Panc1 (cell line): ENCODE measurements at regions of chr17 and their contacts with region 1.

Region 1: GRCh38 chr17:53912117-53912516 is 89.4 kb downstream of the KIF2B start:
- DNase-seq: no peak
- ATAC-seq: no peak
- H3K4me3 ChIP-seq: no peak overlapping the region
- H3K27ac ChIP-seq: no peak overlapping the region
- H3K4me1 ChIP-seq: no peaks in the 10 kb centered on the region
- H3K27me3 ChIP-seq: no peaks in the 10 kb centered on the region
- CTCF ChIP-seq: no peak

Region 2: DNA sequence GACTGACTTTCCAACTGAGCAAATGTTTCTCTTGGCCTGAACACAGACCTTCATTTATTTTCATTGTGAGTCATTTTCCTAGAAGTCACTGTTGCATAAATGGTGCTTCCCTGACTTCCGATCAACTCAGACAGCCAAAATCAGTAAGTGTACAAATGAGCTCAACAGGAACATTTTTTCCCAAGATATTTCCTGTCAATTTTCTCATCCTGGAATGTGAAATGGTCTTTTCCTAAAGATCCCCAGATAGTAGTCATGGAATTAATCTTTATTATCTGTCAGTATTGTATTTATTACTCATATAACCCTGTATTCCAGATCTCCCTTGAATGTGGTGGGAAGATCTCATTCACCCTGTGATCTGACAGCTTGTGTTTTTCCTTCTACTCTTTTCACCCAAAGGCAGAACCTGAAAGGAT is 449.7 kb before region 1 on chr17:
- CTCF ChIA-PET with region 1: interaction called, 16 read pairs
- POLR2A ChIA-PET with region 1: no interaction called
- in situ Hi-C with region 1: no loop called
- intact Hi-C with region 1: no loop called
- DNase-seq: no peak
- ATAC-seq: no peak
- H3K4me3 ChIP-seq: no peak overlapping the region
- H3K27ac ChIP-seq: no peak overlapping the region
- H3K4me1 ChIP-seq: no peaks in the 10 kb centered on the region
- H3K27me3 ChIP-seq: no peaks in the 10 kb centered on the region
- CTCF ChIP-seq: no peak

Region 3: DNA sequence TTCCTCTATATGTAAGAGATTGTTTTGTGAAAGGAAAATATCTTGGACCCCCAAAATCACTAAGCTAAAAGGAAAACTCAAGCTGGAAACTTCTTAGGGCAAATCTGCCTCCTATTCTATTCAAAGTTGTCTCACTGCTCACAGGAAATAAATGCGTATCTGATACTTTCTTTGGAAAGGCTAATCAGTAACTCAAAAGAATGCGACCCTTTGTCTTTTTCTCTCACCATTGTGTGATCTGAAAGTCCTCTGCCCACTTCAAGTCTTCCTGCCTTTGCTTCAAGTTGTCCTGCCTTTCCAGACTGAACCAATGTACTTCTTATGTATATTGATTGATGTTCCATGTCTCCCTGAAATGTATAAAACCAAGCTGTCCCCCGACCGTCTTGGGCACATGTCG is 67.9 kb after region 1 on chr17:
- CTCF ChIA-PET with region 1: no interaction called
- POLR2A ChIA-PET with region 1: no interaction called
- in situ Hi-C with region 1: no loop called
- intact Hi-C with region 1: loop called (anchors 10 kb)
- DNase-seq: no peak
- ATAC-seq: no peak
- H3K4me3 ChIP-seq: no peak overlapping the region
- H3K27ac ChIP-seq: no peak overlapping the region
- H3K4me1 ChIP-seq: no peaks in the 10 kb centered on the region
- H3K27me3 ChIP-seq: no peaks in the 10 kb centered on the region
- CTCF ChIP-seq: no peak

Region 4: GRCh38 chr17:54418467-54418866 is 506.4 kb after region 1 on chr17:
- CTCF ChIA-PET with region 1: no interaction called
- POLR2A ChIA-PET with region 1: interaction called, 10 read pairs
- in situ Hi-C with region 1: no loop called
- intact Hi-C with region 1: no loop called
- DNase-seq: no peak
- ATAC-seq: no peak
- H3K4me3 ChIP-seq: no peak overlapping the region
- H3K27ac ChIP-seq: no peak overlapping the region
- H3K4me1 ChIP-seq: no peaks in the 10 kb centered on the region
- H3K27me3 ChIP-seq: no peaks in the 10 kb centered on the region
- CTCF ChIP-seq: no peak